Endothelial cell of umbilical vein (primary cell): ENCODE measurements at regions of chr12 and their contacts with region 1.

Region 1: DNA sequence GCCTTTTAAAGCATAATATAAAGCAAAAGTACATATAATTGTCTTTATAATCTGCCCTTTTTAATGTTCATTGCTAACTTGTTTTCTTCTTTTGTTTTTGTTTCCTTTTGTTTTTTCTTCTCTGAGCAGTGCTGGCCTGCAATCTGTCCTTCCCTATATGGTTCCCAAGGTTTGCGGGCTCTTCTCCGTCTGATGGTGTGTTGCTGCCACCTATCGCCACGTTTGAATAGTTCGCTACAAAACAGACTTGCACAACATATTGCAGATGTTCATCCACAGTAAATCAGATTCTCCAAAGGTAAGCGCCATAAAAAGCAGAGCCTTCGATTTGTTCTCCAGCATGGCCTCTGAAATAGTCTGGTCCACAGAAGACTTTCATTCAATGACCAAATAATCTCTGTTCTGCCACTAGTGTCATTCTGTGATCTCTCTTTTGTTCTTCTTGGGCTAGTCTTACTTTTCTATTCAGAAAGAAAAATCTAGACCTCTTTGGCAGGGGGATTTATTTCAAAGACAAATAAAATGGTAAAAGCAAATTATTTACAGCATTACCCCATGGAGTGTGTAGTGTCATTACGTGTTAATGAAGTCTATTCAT is 33.5 kb downstream of the C12orf50 start:
- DNase-seq: peak; percentile 74
- H3K4me3 ChIP-seq: no peak overlapping the region
- H3K27ac ChIP-seq: no peak overlapping the region
- H3K4me1 ChIP-seq: no peaks in the 10 kb centered on the region
- H3K27me3 ChIP-seq: no peaks in the 10 kb centered on the region
- CTCF ChIP-seq: peak; percentile 65 to 66
- POLR2A ChIP-seq: no peak

Region 2: DNA sequence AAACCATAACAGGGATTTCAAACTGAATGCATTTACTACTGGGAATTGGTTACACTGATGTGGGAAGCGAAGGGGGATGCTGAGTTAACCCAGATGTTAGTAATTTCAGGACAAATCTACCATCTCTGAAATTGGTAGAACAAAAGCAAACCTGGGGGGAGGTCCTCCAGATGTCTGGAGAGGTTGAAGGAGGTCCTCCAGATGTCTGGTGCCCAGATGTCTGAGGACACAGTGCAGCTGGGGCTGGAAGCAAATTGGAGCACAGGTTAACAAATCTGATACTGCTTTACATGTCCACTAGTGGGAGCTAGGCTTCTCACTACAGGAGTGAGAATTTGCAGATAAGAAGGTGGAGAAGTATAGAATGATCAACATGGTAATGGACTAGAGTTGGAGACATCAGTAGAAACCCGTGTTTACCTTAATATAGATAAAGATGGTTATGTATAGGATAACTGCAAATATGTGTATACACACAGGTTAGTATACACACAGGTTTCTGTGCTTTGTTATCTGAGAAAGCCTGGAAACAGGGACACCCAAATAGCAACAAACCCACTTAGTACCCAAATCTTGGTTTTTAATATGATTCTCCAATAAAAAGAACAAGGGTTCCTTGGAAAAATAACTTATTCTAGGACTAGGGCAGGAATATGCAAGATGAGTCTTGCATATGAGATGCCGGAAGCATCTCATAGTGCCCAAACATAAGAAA is 128.9 kb before region 1 on chr12:
- CTCF ChIA-PET with region 1: no interaction called
- POLR2A ChIA-PET with region 1: no interaction called
- dilution Hi-C with region 1: no loop called
- intact Hi-C with region 1: loop called (anchors 5 kb)
- DNase-seq: peak; percentile 9
- H3K4me3 ChIP-seq: no peak overlapping the region
- H3K27ac ChIP-seq: no peak overlapping the region
- H3K4me1 ChIP-seq: no peaks in the 10 kb centered on the region
- H3K27me3 ChIP-seq: no peaks in the 10 kb centered on the region
- CTCF ChIP-seq: peak; percentile 28 to 46
- POLR2A ChIP-seq: no peak